ENCODE measurements at regions of chr12 and their contacts with region 1.

Region 1: DNA sequence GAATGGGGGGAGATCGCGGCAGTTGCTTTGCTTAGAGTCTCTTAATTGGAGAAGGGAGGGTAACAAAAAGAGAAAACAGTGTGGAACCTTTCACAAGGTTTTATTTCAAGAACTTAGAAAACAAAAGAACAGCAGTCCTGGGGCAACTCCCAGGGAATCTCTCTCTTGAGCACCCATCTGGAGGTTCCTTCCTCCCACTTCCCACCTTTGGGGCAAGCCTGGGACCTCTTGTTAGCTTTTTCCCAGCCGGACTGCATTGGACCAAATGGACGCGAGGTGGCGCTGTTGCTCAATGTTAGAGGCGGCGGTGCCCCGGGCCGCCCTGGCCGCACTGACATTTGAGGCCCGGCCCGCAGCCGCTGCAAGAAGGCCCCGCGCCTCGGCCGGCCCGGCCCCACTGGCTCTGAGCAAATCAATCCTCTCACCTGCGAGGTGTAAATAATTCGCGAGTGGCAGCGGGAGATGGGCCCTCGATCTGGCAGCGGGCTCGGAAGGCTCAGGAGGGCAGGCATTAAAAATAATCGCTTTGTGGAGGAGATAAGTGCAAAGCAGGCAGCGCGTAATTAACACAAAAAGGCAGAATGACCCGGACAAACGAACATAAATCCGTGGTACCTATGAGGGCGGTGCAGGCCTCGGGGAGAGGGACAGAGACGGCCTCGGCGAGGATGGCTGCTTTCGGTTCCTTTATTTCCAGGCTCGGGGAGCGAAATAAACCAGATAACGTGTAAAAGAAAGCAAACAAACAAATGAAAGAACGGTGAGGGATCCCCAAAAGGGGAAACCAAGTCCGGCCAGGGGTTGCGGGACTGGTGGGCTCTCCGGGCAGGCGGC is 2.7 kb upstream of the HOXC8 start:
- DNase-seq: peak; percentile 76 to 87 (median 80)
- H3K4me3 ChIP-seq: peak overlapping the region in 1 of 2 donors; percentile 44
- H3K4me3 Mint-ChIP-seq: peak overlapping the region; percentile 64 to 92 (median 79)
- H3K27ac ChIP-seq: no peak overlapping the region
- H3K27ac Mint-ChIP-seq: peak overlapping the region in 5 of 7 donors; percentile 5 to 58 (median 18)
- H3K4me1 ChIP-seq: peaks cover 19% of the 10 kb centered on the region
- H3K4me1 Mint-ChIP-seq: peaks cover 10 to 42% (median 26%) of the 10 kb centered on the region in 4 donors
- H3K27me3 ChIP-seq: peaks cover 84% of the 10 kb centered on the region
- H3K27me3 Mint-ChIP-seq: peaks cover 70 to 85% of the 10 kb centered on the region in 2 donors

Region 2: GRCh38 chr12:53746592-53747092 is 259.4 kb before region 1 on chr12:
- CTCF ChIA-PET with region 1: no interaction called
- POLR2A ChIA-PET with region 1: no interaction called
- intact Hi-C with region 1: no loop called
- DNase-seq: peak; percentile 82 to 86 (median 84)
- H3K4me3 ChIP-seq: no peak overlapping the region
- H3K4me3 Mint-ChIP-seq: peak overlapping the region in 6 of 8 donors; percentile 48 to 84 (median 70)
- H3K27ac ChIP-seq: no peak overlapping the region
- H3K27ac Mint-ChIP-seq: peak overlapping the region in 1 of 7 donors; percentile 87
- H3K4me1 ChIP-seq: peaks cover 37% of the 10 kb centered on the region
- H3K4me1 Mint-ChIP-seq: peaks cover 8 to 21% (median 18%) of the 10 kb centered on the region in 4 donors
- H3K27me3 ChIP-seq: peaks cover 40% of the 10 kb centered on the region
- H3K27me3 Mint-ChIP-seq: peaks cover 22 to 39% of the 10 kb centered on the region in 2 donors

Region 3: DNA sequence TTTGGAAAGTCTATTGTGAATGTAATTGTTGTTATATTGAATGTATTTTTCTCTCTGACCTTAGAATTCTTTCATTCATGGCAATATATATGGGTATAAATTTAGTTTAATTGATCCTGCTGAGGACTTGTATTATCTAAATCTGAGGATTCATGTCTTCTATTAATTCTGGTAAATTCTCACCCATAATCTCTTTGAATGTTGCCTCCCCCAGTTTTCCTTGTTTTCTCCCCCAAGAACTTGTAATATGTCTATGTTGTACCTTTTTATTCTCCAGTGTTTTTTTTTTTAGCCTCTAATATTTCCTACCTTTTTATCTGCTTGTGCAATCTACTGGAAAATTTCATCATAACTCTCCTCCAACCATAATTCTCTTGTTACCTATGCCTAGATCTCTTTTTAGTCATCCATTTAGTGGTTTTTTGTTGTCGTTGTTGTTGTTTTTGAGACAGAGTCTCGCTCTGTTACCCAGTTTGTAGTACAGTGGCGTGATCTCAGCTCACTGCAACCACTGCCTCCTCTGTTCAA is 88.9 kb before region 1 on chr12:
- CTCF ChIA-PET with region 1: no interaction called
- POLR2A ChIA-PET with region 1: no interaction called
- intact Hi-C with region 1: no loop called
- DNase-seq: no peak
- H3K4me3 ChIP-seq: no peak overlapping the region
- H3K4me3 Mint-ChIP-seq: no peak overlapping the region
- H3K27ac ChIP-seq: no peak overlapping the region
- H3K27ac Mint-ChIP-seq: no peak overlapping the region
- H3K4me1 ChIP-seq: no peaks in the 10 kb centered on the region
- H3K4me1 Mint-ChIP-seq: no peaks in the 10 kb centered on the region
- H3K27me3 ChIP-seq: peaks cover 7% of the 10 kb centered on the region
- H3K27me3 Mint-ChIP-seq: peaks cover 33 to 43% of the 10 kb centered on the region in 2 donors

Region 4: DNA sequence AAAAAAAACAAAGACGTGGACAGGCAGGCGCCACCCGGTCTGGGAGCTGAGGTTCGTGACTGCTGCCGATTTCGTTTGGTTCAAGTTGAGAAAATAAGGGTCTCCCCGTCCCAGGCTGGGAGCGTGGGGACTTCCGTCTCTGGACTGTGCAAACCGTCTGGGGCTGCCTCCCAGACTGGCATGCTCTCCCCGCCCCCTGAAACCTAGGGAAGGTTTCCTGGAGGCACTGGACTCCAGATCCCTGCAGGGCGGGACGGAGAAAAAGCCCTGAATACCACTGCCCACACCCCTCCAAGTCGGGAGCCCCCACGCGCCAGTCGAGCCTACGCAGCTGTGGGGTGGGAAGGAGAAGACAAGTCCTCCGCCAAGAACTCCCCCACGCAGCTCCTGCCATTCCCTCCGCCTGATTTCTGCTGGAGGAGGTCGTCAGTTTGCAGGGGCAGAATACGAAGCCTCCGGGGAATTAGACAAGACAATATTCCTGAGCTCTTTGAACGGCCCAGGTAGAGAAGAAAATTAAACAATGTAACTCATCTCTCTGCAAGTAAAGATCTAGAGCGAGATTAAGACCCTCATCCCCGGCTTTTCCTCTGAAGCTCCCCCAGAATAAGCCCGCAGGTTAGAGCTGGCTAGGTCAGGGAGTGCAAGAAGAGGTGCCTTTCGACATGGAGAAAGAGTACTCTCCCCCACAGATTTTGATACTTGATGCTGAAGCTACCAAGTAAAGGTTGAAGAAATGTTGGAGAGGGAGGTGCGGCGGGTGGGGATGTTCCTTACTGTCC is 77.8 kb before region 1 on chr12:
- CTCF ChIA-PET with region 1: no interaction called
- POLR2A ChIA-PET with region 1: no interaction called
- intact Hi-C with region 1: no loop called
- DNase-seq: no peak
- H3K4me3 ChIP-seq: no peak overlapping the region
- H3K4me3 Mint-ChIP-seq: peak overlapping the region in 2 of 8 donors; percentile 14 to 28
- H3K27ac ChIP-seq: no peak overlapping the region
- H3K27ac Mint-ChIP-seq: peak overlapping the region in 1 of 7 donors; percentile 57
- H3K4me1 ChIP-seq: no peaks in the 10 kb centered on the region
- H3K4me1 Mint-ChIP-seq: peaks cover 0 to 8% (median 0%) of the 10 kb centered on the region in 4 donors
- H3K27me3 ChIP-seq: peaks cover 87% of the 10 kb centered on the region
- H3K27me3 Mint-ChIP-seq: peaks cover 67 to 81% of the 10 kb centered on the region in 2 donors

Region 5: DNA sequence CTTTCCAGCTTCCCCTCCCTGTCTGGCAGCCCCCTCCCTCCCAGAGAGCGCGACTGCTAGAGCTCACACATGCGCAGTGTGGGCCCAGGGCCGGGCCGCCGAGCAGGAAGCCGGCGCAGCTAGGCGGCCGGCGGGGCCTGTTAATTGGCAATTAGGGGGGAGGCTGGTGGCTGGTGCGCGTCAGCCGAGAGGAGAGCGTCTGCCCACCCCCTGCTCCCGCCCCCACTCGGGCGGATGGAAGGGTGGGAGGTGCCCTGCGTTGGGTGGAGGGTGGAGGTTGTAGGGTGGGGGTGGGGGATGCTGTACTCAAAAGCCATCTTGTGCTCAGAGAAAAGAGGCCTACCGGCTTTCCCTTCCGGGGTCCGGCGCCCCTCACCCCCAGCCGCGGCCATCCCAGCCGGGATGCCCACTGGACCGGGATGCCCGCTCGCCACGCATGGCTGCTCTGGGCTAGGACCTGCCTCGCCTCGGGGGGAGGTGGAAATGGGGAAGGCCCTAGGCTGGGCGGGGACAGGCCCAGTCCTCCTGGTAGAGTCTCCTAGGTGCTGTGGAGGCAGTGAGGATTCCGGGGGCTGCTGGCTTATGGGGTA is 11.9 kb after region 1 on chr12:
- CTCF ChIA-PET with region 1: interaction called, 14 read pairs
- POLR2A ChIA-PET with region 1: interaction called, 19 read pairs
- intact Hi-C with region 1: no loop called
- DNase-seq: peak; percentile 66 to 74 (median 68)
- H3K4me3 ChIP-seq: peak overlapping the region; percentile 29 to 68
- H3K4me3 Mint-ChIP-seq: peak overlapping the region; percentile 74 to 93 (median 86)
- H3K27ac ChIP-seq: no peak overlapping the region
- H3K27ac Mint-ChIP-seq: peak overlapping the region in 3 of 7 donors; percentile 37 to 57 (median 49)
- H3K4me1 ChIP-seq: peaks cover 21% of the 10 kb centered on the region
- H3K4me1 Mint-ChIP-seq: peaks cover 6 to 31% (median 17%) of the 10 kb centered on the region in 4 donors
- H3K27me3 ChIP-seq: peaks cover 59% of the 10 kb centered on the region
- H3K27me3 Mint-ChIP-seq: peaks cover 49 to 66% of the 10 kb centered on the region in 2 donors

Region 6: GRCh38 chr12:54025499-54026405 is 19.7 kb after region 1 on chr12:
- CTCF ChIA-PET with region 1: interaction called, 4 read pairs
- POLR2A ChIA-PET with region 1: interaction called, 3 read pairs
- intact Hi-C with region 1: loop called (anchors 2 kb)
- DNase-seq: no peak
- H3K4me3 ChIP-seq: no peak overlapping the region
- H3K4me3 Mint-ChIP-seq: no peak overlapping the region
- H3K27ac ChIP-seq: no peak overlapping the region
- H3K27ac Mint-ChIP-seq: no peak overlapping the region
- H3K4me1 ChIP-seq: no peaks in the 10 kb centered on the region
- H3K4me1 Mint-ChIP-seq: peaks cover 7 to 32% (median 12%) of the 10 kb centered on the region in 4 donors
- H3K27me3 ChIP-seq: peaks cover 65% of the 10 kb centered on the region
- H3K27me3 Mint-ChIP-seq: peaks cover 60 to 74% of the 10 kb centered on the region in 2 donors

Region 7: GRCh38 chr12:54191550-54192022 is 185.5 kb after region 1 on chr12:
- CTCF ChIA-PET with region 1: interaction called, 109 read pairs
- POLR2A ChIA-PET with region 1: interaction called, 9 read pairs
- intact Hi-C with region 1: loop called (anchors 1 kb)
- DNase-seq: peak; percentile 79 to 81 (median 79)
- H3K4me3 ChIP-seq: no peak overlapping the region
- H3K4me3 Mint-ChIP-seq: peak overlapping the region in 4 of 8 donors; percentile 11 to 66 (median 32)
- H3K27ac ChIP-seq: no peak overlapping the region
- H3K27ac Mint-ChIP-seq: peak overlapping the region in 2 of 7 donors; percentile 67 to 68
- H3K4me1 ChIP-seq: peaks cover 22% of the 10 kb centered on the region
- H3K4me1 Mint-ChIP-seq: peaks cover 17 to 60% (median 25%) of the 10 kb centered on the region in 4 donors
- H3K27me3 ChIP-seq: peaks cover 23% of the 10 kb centered on the region
- H3K27me3 Mint-ChIP-seq: peaks cover 20 to 32% of the 10 kb centered on the region in 2 donors

Region 8: GRCh38 chr12:54201001-54201794 is 195.1 kb after region 1 on chr12:
- CTCF ChIA-PET with region 1: interaction called, 103 read pairs
- POLR2A ChIA-PET with region 1: interaction called, 5 read pairs
- intact Hi-C with region 1: loop called (anchors 1 kb)
- DNase-seq: peak; percentile 60 to 71 (median 64)
- H3K4me3 ChIP-seq: no peak overlapping the region
- H3K4me3 Mint-ChIP-seq: no peak overlapping the region
- H3K27ac ChIP-seq: no peak overlapping the region
- H3K27ac Mint-ChIP-seq: peak overlapping the region in 1 of 7 donors; percentile 42
- H3K4me1 ChIP-seq: no peaks in the 10 kb centered on the region
- H3K4me1 Mint-ChIP-seq: peaks cover 0 to 5% (median 2%) of the 10 kb centered on the region in 4 donors
- H3K27me3 ChIP-seq: peaks cover 19% of the 10 kb centered on the region
- H3K27me3 Mint-ChIP-seq: peaks cover 37 to 51% of the 10 kb centered on the region in 2 donors